Naive thymus-derived CD4-positive, alpha-beta T cell (primary cell): ENCODE measurements at regions of chr5 and their contacts with region 1.

Region 1: GRCh38 chr5:178859625-178860531 is at the start of gene ZNF354B:
- DNase-seq: peak; percentile 64 to 87 (median 81)
- ATAC-seq: peak; percentile 98
- H3K4me3 ChIP-seq: peak within 1 kb of the TSS; percentile 77
- H3K4me3 Mint-ChIP-seq: peak within 1 kb of the TSS; percentile 85 to 95 (median 93)
- H3K27ac ChIP-seq: peak within 1 kb of the TSS; percentile 75
- H3K27ac Mint-ChIP-seq: peak within 1 kb of the TSS; percentile 71 to 95 (median 90)
- H3K4me1 ChIP-seq: peaks cover 5 to 6% of the 10 kb centered on the region in 2 donors
- H3K4me1 Mint-ChIP-seq: peaks cover 22 to 34% (median 30%) of the 10 kb centered on the region in 7 donors
- H3K27me3 ChIP-seq: no peaks in the 10 kb centered on the region
- H3K27me3 Mint-ChIP-seq: peaks cover 0 to 4% (median 2%) of the 10 kb centered on the region in 5 donors
- total RNA-seq, gene ZNF354B: 12.3 to 36.7 (median 14.4) TPM

Region 2: DNA sequence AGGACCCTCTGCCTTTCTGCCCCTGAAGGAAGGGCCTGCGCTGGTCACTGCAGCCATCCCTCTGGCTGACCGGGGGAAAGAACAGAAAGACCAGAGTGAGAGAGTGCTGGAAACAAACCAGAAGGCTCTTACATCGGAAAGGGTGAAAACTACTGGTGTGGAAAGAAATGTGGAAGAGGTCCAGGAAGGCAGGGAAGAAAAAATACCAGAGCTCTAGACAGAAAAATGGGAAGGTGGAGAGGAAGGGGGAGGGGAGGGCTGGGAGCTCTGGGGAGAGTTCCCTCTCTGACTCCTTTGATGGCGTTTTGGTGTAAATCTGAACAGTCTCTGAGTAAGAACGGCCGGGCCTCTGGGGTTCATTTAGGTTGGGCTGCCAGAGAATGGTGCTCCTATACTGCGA is 317.4 kb before region 1 on chr5:
- CTCF ChIA-PET with region 1: no interaction called
- POLR2A ChIA-PET with region 1: no interaction called
- intact Hi-C with region 1: no loop called
- DNase-seq: no peak
- ATAC-seq: no peak
- H3K4me3 ChIP-seq: no peak overlapping the region
- H3K4me3 Mint-ChIP-seq: no peak overlapping the region
- H3K27ac ChIP-seq: no peak overlapping the region
- H3K27ac Mint-ChIP-seq: no peak overlapping the region
- H3K4me1 ChIP-seq: no peaks in the 10 kb centered on the region
- H3K4me1 Mint-ChIP-seq: no peaks in the 10 kb centered on the region
- H3K27me3 ChIP-seq: no peaks in the 10 kb centered on the region
- H3K27me3 Mint-ChIP-seq: peaks cover 0 to 4% (median 0%) of the 10 kb centered on the region in 5 donors

Region 3: DNA sequence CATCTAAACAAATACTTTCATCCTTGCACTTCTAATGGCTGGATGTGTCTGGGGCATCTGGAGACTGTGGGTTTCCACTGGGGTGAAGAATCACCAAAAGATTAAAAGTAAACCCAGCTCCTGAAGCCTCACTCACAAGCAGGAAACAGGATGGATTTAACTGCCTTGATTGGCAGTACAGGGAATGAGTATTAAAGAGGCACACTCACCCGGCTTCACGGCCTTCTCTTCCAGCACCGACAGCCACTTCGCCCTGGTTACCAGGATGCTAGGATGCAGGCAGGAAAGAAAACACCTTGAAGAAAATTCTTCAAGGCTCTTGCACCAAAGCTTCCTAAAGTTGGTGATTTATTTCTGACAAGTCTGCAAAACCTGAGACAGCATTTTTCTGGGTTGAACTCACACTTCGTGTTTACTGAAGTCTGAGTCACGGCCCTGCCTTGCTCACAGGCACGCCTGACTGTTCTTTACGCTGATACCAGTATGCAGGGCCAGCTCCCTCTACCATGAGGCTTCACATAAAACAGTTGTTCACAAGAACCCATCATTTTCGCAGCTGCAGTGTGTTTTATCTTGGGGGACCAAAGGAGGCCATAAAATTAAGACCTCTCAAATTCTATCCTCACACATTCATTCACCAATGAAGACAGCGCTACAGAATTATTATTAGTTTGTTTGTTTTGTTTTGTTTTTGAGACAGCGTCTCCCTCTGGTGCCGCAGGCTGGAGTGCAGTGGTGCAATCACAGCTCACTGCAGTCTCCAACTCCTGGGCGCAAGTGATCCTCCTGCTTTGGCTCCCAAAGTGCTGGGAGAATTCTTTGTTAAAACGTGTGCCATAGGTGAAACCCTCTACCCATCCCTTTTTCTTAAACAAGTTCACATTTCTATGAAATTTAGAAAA is 72.8 kb before region 1 on chr5:
- CTCF ChIA-PET with region 1: no interaction called
- POLR2A ChIA-PET with region 1: no interaction called
- intact Hi-C with region 1: no loop called
- DNase-seq: no peak
- ATAC-seq: no peak
- H3K4me3 ChIP-seq: no peak overlapping the region
- H3K4me3 Mint-ChIP-seq: no peak overlapping the region
- H3K27ac ChIP-seq: no peak overlapping the region
- H3K27ac Mint-ChIP-seq: no peak overlapping the region
- H3K4me1 ChIP-seq: no peaks in the 10 kb centered on the region
- H3K4me1 Mint-ChIP-seq: peaks cover 0 to 5% (median 0%) of the 10 kb centered on the region in 7 donors
- H3K27me3 ChIP-seq: no peaks in the 10 kb centered on the region
- H3K27me3 Mint-ChIP-seq: peaks cover 0 to 6% (median 5%) of the 10 kb centered on the region in 5 donors

Region 4: GRCh38 chr5:179060116-179061008 is 200.5 kb after region 1 on chr5 and contains the start of gene ZNF354C:
- CTCF ChIA-PET with region 1: interaction called, 7 read pairs
- POLR2A ChIA-PET with region 1: interaction called, 29 read pairs
- intact Hi-C with region 1: loop called (anchors 1 kb)
- DNase-seq: peak; percentile 77 to 87 (median 82)
- ATAC-seq: peak; percentile 98
- H3K4me3 ChIP-seq: peak within 1 kb of the TSS; percentile 73
- H3K4me3 Mint-ChIP-seq: peak within 1 kb of the TSS; percentile 89 to 99 (median 94)
- H3K27ac ChIP-seq: peak within 1 kb of the TSS; percentile 79
- H3K27ac Mint-ChIP-seq: peak within 1 kb of the TSS; percentile 82 to 96 (median 92)
- H3K4me1 ChIP-seq: peaks cover 0 to 9% of the 10 kb centered on the region in 2 donors
- H3K4me1 Mint-ChIP-seq: peaks cover 16 to 43% (median 32%) of the 10 kb centered on the region in 7 donors
- H3K27me3 ChIP-seq: no peaks in the 10 kb centered on the region
- H3K27me3 Mint-ChIP-seq: peaks cover 0 to 9% (median 5%) of the 10 kb centered on the region in 5 donors
- total RNA-seq, gene ZNF354C: 3.8 to 12.3 (median 5.2) TPM